AG04450 (cell line): ENCODE measurements at regions of chr4 and their contacts with region 1.

Region 1: GRCh38 chr4:76758290-76758882 is 139.6 kb downstream of the SOWAHB start:
- DNase-seq: no peak
- H3K4me3 ChIP-seq: no peak overlapping the region
- H3K27ac ChIP-seq: no peak overlapping the region
- H3K27me3 ChIP-seq: no peaks in the 10 kb centered on the region
- CTCF ChIP-seq: peak; percentile 78

Region 2: GRCh38 chr4:76511947-76512346 is 246.4 kb before region 1 on chr4:
- CTCF ChIA-PET with region 1: interaction called, 14 read pairs
- POLR2A ChIA-PET with region 1: no interaction called
- DNase-seq: no peak
- H3K4me3 ChIP-seq: no peak overlapping the region
- H3K27ac ChIP-seq: no peak overlapping the region
- H3K27me3 ChIP-seq: no peaks in the 10 kb centered on the region
- CTCF ChIP-seq: no peak

Region 3: GRCh38 chr4:76772498-76773106 is 14.2 kb after region 1 on chr4:
- CTCF ChIA-PET with region 1: interaction called, 12 read pairs
- POLR2A ChIA-PET with region 1: interaction called, 5 read pairs
- DNase-seq: no peak
- H3K4me3 ChIP-seq: no peak overlapping the region
- H3K27ac ChIP-seq: no peak overlapping the region
- H3K27me3 ChIP-seq: no peaks in the 10 kb centered on the region
- CTCF ChIP-seq: no peak

Region 4: DNA sequence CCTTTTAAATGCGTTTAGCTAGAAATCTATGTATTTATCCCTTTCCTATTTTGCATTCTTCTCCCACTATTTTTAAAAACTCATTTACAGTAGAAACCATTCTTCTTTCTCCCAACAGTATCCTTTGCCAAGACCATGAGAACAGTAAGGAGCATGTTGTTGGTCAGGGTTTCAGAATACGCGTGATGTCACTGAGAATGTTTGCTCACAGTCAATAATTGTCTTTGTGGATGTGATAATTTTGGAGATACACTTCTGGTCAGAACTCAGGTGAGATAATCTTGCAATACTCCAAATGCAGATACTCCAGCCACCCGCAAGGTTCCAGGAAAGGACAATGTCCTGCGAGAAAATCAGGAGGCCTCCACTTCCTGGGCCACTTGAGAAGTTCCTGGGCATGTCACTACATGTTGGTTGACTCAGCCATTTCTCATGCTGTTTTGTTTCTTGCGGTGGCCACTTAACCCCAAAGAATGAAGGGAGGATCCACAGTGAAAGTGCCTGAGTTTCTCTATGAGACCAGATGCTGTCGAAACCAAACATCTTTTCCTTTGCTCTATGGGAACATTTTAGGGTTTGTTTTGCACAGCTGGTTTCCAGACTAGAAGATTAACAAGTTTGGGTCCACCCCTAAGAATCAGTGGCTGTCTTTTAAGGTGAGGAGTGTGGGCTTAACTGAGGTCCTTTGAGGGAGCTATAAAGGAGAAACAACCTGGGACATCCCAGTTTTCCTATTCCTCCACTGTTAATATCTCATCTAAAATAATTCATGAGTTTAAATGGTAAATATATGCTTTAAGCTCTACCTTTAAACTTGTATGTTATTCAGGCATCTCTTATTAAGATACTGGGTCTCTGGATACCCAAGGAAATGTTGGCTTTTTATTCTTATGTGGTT is 23.6 kb after region 1 on chr4:
- CTCF ChIA-PET with region 1: interaction called, 10 read pairs
- POLR2A ChIA-PET with region 1: interaction called, 8 read pairs
- DNase-seq: peak; percentile 91
- H3K4me3 ChIP-seq: no peak overlapping the region; the same call in 1 of the 2 replicates
- H3K27ac ChIP-seq: peak overlapping the region; percentile 82
- H3K27me3 ChIP-seq: no peaks in the 10 kb centered on the region
- CTCF ChIP-seq: no peak

Region 5: DNA sequence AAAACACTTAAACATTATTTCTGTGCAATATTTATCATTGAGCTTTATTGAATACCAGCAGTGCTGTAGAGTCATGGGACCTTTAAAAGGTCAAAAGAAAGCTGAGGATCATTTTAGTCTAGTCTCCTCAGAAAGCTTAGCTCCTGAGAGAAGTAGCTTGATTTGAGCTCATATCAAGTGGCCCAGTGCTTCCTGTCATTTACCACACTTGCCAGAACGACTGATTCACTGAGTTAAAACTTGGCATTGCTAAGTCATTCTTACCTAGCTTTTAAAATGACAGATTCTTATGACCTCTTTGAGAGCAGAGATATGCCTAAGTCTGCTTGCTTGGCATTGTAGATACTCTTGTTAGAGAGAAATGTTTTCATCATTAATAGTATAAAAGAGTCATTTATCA is 206.4 kb after region 1 on chr4:
- CTCF ChIA-PET with region 1: no interaction called
- POLR2A ChIA-PET with region 1: interaction called, 11 read pairs
- DNase-seq: no peak
- H3K4me3 ChIP-seq: no peak overlapping the region
- H3K27ac ChIP-seq: no peak overlapping the region
- H3K27me3 ChIP-seq: no peaks in the 10 kb centered on the region
- CTCF ChIP-seq: no peak

Region 6: GRCh38 chr4:76987153-76987587 is 228.8 kb after region 1 on chr4:
- CTCF ChIA-PET with region 1: interaction called, 12 read pairs
- POLR2A ChIA-PET with region 1: interaction called, 11 read pairs
- DNase-seq: peak; percentile 96
- H3K4me3 ChIP-seq: peak overlapping the region; percentile 14; the same call in 1 of the 2 replicates
- H3K27ac ChIP-seq: peak overlapping the region; percentile 96
- H3K27me3 ChIP-seq: no peaks in the 10 kb centered on the region
- CTCF ChIP-seq: peak; percentile 14; the same call in 1 of the 2 replicates